RWPE1 (cell line): ENCODE measurements at regions of chr1 and their contacts with region 1.

Region 1: GRCh38 chr1:231340328-231341013 is 2.4 kb downstream of the SPRTN start:
- DNase-seq: no peak
- H3K27ac ChIP-seq: peak overlapping the region; percentile 80
- CTCF ChIP-seq: no peak

Region 2: DNA sequence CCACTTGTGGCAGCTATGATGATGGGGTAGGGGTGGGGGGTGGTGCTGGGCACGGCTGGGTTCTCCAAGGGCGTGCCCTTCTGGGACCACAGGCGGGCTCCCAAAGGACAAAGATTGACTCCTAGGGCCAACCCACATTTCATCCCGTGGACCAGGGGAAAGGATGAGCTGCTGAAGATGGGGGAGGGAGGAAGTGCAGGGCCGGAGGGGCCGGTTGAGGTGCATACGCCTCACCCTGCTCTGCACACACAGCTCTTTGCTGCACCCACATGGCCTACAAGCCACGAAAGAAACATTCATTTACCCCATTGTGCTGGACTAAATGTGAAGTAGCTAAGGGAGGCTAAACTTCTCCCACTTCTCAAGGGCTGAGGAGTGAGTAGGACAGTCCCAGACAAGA is 133.6 kb before region 1 on chr1:
- CTCF ChIA-PET with region 1: no interaction called
- POLR2A ChIA-PET with region 1: no interaction called
- DNase-seq: no peak
- H3K27ac ChIP-seq: no peak overlapping the region
- CTCF ChIP-seq: no peak

Region 3: GRCh38 chr1:231265379-231265778 is 75.1 kb before region 1 on chr1:
- CTCF ChIA-PET with region 1: no interaction called
- POLR2A ChIA-PET with region 1: interaction called, 13 read pairs
- DNase-seq: no peak
- H3K27ac ChIP-seq: no peak overlapping the region
- CTCF ChIP-seq: no peak

Region 4: GRCh38 chr1:231397886-231398671 is 57.6 kb after region 1 on chr1:
- CTCF ChIA-PET with region 1: no interaction called
- POLR2A ChIA-PET with region 1: no interaction called
- DNase-seq: no peak
- H3K27ac ChIP-seq: no peak overlapping the region
- CTCF ChIP-seq: no peak